ENCODE measurements at regions of chr9 and their contacts with region 1.

Region 1: GRCh38 chr9:36632892-36633291 is 60.2 kb downstream of the MELK start:
- DNase-seq: no peak
- H3K4me3 ChIP-seq: no peak overlapping the region
- H3K27ac ChIP-seq: no peak overlapping the region
- H3K27me3 ChIP-seq: peaks cover 0 to 4% (median 0%) of the 10 kb centered on the region in 45 donors
- CTCF ChIP-seq: peak; percentile 38 to 78 (median 63)

Region 2: GRCh38 chr9:36862206-36863145 is 229.6 kb after region 1 on chr9:
- intact Hi-C with region 1: loop called in 1 of 2 experiments (anchors 10 kb)
- DNase-seq: peak in 8 of 10 donors; percentile 39 to 73 (median 54)
- H3K4me3 ChIP-seq: no peak overlapping the region
- H3K27ac ChIP-seq: no peak overlapping the region
- H3K27me3 ChIP-seq: peaks cover 0 to 12% (median 0%) of the 10 kb centered on the region in 45 donors
- CTCF ChIP-seq: peak; percentile 33 to 76 (median 64)

Region 3: DNA sequence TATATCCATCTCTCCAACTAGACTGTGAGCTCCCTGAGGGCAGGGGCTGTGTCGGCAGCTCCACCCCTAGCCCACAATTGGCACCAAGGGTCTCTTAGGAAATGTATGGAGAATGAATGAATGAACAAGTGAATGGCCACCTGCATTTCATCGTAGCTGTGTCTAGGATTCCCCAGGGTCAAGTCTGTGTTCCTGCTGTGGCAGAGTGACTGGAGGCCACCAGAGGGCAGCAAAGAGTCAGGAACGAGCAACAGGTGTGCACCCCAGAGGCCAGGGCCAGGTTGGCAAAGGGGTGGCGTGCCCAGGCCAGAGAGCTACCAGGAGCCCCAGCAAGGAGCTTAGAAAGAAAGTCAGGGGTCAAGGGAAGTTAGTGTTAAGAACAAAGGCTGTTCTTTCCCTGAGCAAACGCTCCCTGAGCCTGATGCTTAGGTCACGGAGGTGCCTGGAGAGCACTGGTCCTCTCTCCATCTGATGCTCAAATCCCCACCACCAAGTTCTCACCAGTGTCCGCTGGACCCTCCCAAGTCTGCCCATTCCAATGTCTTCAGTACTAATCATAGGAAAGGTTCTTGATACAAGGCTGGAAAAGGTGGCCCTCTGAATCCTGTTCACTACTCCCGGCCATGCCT is 240.5 kb after region 1 on chr9:
- intact Hi-C with region 1: loop called (anchors 10 kb)
- DNase-seq: peak in 8 of 10 donors; percentile 36 to 67 (median 50)
- H3K4me3 ChIP-seq: no peak overlapping the region
- H3K27ac ChIP-seq: no peak overlapping the region
- H3K27me3 ChIP-seq: peaks cover 0 to 6% (median 0%) of the 10 kb centered on the region in 45 donors
- CTCF ChIP-seq: peak; percentile 39 to 86 (median 77)

Region 4: DNA sequence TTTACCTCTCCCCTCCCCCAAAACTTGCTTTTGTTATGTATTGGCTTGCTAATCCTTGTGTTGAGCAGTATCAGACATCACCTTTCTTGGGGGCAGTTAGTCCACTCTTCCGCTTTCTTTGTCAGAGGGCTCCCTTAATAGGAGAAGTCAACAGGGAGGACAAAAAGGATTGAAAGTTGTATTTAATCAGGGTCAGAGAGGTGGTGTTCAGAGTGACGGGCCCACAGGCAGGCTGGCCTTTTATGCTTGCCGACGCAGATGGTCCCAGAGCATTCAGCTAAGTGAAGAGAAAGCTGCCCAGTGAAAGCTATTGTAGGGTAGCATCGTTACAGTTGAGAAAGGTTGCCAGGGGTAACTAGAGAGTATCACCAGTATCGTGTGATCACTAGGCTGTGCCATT is 618.6 kb after region 1 on chr9:
- intact Hi-C with region 1: loop called in 1 of 2 experiments (anchors 10 kb)
- DNase-seq: no peak
- H3K4me3 ChIP-seq: no peak overlapping the region
- H3K27ac ChIP-seq: no peak overlapping the region
- H3K27me3 ChIP-seq: no peaks in the 10 kb centered on the region
- CTCF ChIP-seq: no peak